ENCODE measurements at regions of chr2 and their contacts with region 1.

Region 1: GRCh38 chr2:7044261-7045250 is 127.3 kb downstream of the RNF144A start:
- DNase-seq: no peak
- H3K4me3 ChIP-seq: no peak overlapping the region
- CTCF ChIP-seq: peak; percentile 90

Region 2: GRCh38 chr2:6674381-6674780 is 370.2 kb before region 1 on chr2:
- CTCF ChIA-PET with region 1: no interaction called
- POLR2A ChIA-PET with region 1: no interaction called
- DNase-seq: no peak
- H3K4me3 ChIP-seq: no peak overlapping the region
- CTCF ChIP-seq: no peak

Region 3: DNA sequence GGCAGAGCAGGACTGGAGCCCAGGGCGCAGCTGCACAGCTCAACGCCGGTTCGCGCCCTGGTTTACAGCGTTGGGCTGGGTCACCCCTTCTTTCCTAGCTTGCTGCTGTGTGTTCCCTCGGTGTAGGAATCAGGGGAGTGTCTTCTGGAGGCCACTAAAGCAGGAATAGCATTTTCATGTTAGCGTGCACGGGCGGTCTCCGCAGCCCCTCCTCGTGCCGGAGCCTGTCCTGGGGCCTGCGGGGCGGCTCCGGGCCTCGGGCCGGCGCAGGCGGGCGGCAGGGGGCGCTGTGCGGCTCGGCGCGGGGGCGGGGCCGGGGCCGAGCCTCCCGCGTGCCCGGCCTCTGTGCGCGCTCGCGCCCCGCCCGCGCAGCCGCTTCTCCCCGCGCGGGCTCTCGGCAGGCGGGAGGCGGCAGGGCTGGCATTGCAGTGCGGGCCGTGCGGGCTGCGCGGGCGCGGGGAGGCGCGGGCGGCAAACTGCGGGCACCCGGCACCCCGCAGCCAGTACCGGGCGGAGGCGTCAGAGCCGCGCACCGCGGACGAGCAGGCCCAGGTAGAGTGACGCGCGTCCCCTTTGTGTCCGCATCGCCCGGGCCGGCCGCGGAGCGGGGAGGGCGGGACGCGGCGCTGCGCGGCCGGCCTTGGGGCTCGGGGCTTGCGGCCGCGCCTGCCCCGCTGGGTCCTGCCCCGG is 127.3 kb before region 1 on chr2 and contains the start of gene RNF144A:
- CTCF ChIA-PET with region 1: interaction called, 16 read pairs
- POLR2A ChIA-PET with region 1: no interaction called
- DNase-seq: no peak
- H3K4me3 ChIP-seq: peak within 1 kb of the TSS; percentile 54
- CTCF ChIP-seq: peak; percentile 26

Region 4: GRCh38 chr2:7022492-7023385 is 21.8 kb before region 1 on chr2:
- CTCF ChIA-PET with region 1: interaction called, 34 read pairs
- POLR2A ChIA-PET with region 1: no interaction called
- DNase-seq: no peak
- H3K4me3 ChIP-seq: no peak overlapping the region
- CTCF ChIP-seq: no peak

Region 5: GRCh38 chr2:7057865-7058400 is 13.4 kb after region 1 on chr2:
- CTCF ChIA-PET with region 1: interaction called, 18 read pairs
- POLR2A ChIA-PET with region 1: no interaction called
- DNase-seq: no peak
- H3K4me3 ChIP-seq: no peak overlapping the region
- CTCF ChIP-seq: no peak